IMR-90 (cell line): ENCODE measurements at regions of chrX and their contacts with region 1.

Region 1: DNA sequence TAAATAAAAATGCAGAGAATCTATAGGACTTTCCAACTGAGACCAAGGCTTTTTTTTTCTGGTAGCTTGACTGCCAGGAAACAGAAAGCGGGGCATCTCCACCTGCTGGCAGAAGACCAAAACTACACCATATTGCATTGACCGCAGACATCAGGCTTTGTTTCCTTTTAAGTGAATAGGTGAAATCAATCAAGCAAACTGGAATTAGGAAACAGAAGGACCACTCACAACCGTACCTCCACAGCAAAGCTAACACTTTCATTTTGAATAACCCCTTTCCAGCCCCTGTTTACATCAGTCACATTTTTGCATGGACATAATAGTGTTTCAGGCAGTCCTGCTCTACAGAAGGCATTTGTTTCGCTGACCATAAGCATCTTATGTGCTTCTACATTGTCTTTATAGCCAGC is 218.2 kb downstream of the IDS start:
- DNase-seq: peak; percentile 31
- ATAC-seq: peak; percentile 53
- H3K4me3 ChIP-seq: no peak overlapping the region
- H3K27ac ChIP-seq: no peak overlapping the region
- H3K4me1 ChIP-seq: no peaks in the 10 kb centered on the region
- H3K27me3 ChIP-seq: no peaks in the 10 kb centered on the region
- CTCF ChIP-seq: peak; percentile 63
- POLR2A ChIP-seq: no peak
- RAD21 ChIP-seq: peak; percentile 67

Region 2: GRCh38 chrX:148049441-148049840 is 1237.5 kb before region 1 on chrX:
- CTCF ChIA-PET with region 1: no interaction called
- POLR2A ChIA-PET with region 1: no interaction called
- dilution Hi-C with region 1: no loop called
- in situ Hi-C with region 1: loop called (anchors 25 kb)
- intact Hi-C with region 1: loop called (anchors 1 kb)
- DNase-seq: peak; percentile 18
- ATAC-seq: no peak
- H3K4me3 ChIP-seq: no peak overlapping the region
- H3K27ac ChIP-seq: no peak overlapping the region
- H3K4me1 ChIP-seq: no peaks in the 10 kb centered on the region
- H3K27me3 ChIP-seq: no peaks in the 10 kb centered on the region
- CTCF ChIP-seq: peak; percentile 63
- POLR2A ChIP-seq: no peak
- RAD21 ChIP-seq: peak; percentile 62

Region 3: GRCh38 chrX:148530464-148531077 is 756.4 kb before region 1 on chrX:
- CTCF ChIA-PET with region 1: no interaction called
- POLR2A ChIA-PET with region 1: no interaction called
- dilution Hi-C with region 1: no loop called
- in situ Hi-C with region 1: no loop called
- intact Hi-C with region 1: loop called (anchors 2 kb)
- DNase-seq: peak; percentile 33
- ATAC-seq: peak; percentile 42; the same call in 1 of the 2 replicates
- H3K4me3 ChIP-seq: no peak overlapping the region
- H3K27ac ChIP-seq: no peak overlapping the region
- H3K4me1 ChIP-seq: no peaks in the 10 kb centered on the region
- H3K27me3 ChIP-seq: no peaks in the 10 kb centered on the region
- CTCF ChIP-seq: peak; percentile 59
- POLR2A ChIP-seq: no peak
- RAD21 ChIP-seq: peak; percentile 31